ENCODE measurements at regions of chr5 and their contacts with region 1.

Region 1: GRCh38 chr5:64147849-64148441 is 17.7 kb upstream of the RNF180 start:
- DNase-seq: no peak
- H3K4me3 ChIP-seq: no peak overlapping the region
- H3K27me3 ChIP-seq: no peaks in the 10 kb centered on the region; the same call in 1 of the 2 replicates
- CTCF ChIP-seq: peak; percentile 92

Region 2: GRCh38 chr5:64125521-64125920 is 22.4 kb before region 1 on chr5:
- CTCF ChIA-PET with region 1: no interaction called
- POLR2A ChIA-PET with region 1: no interaction called
- DNase-seq: no peak
- H3K4me3 ChIP-seq: no peak overlapping the region
- H3K27me3 ChIP-seq: no peaks in the 10 kb centered on the region
- CTCF ChIP-seq: no peak

Region 3: DNA sequence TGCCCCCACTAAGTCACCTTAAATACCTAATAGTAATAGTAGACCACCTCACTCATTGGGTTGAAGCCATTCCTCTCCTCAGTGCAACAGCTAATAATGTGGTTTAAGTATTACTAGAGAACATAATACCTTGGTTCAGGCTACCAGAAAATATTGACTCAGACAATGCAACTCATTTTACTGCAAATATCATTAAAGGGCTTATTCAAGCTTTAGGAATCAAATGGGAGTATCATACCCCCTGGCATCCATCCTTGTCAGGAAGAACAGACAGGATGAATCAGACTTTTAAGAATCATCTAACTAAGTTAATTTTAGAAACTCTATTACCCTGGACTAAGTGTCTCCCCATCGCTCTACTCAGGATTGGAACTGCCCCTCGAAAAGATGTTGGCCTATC is 10.9 kb after region 1 on chr5:
- CTCF ChIA-PET with region 1: interaction called, 14 read pairs
- POLR2A ChIA-PET with region 1: no interaction called
- DNase-seq: no peak
- H3K4me3 ChIP-seq: no peak overlapping the region
- H3K27me3 ChIP-seq: no peaks in the 10 kb centered on the region
- CTCF ChIP-seq: no peak

Region 4: DNA sequence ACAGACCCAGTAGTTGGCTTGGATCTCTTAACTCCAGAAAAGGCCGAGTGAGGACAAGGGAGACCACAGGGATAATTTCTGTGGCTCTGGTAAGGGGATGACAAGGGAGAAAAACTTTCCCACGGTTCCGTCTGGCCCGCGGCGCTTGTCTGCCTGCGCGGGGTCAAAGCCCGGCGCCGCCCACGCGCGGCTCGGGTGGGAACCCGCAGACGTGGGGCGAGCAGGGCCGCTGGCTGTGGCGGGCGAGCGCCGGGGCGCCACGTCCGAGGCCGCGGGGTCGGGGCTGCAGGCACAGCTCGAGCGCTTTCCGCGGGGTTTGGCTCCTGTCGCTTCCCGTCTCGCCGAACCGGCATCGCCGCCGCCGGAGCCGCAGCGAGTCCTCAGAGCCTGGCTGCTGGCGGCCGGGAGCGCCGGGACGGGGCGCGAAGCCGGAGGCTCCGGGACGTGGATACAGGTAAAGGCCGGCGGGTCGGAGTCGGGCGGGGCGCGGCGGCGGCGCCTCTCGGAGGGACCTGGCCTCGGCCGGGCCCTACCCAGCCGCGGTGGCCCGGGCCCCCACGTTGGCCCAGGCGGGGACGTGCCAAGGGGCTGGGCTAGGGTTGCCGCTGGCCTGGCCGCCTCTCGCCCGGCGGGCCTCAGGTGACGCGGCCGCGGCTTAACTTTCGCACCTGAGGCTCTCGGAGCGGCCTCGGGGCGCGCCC is 17.7 kb after region 1 on chr5 and contains the start of gene RNF180:
- CTCF ChIA-PET with region 1: interaction called, 14 read pairs
- POLR2A ChIA-PET with region 1: no interaction called
- DNase-seq: no peak
- H3K4me3 ChIP-seq: peak within 1 kb of the TSS; percentile 75
- H3K27me3 ChIP-seq: peaks cover 3% of the 10 kb centered on the region
- CTCF ChIP-seq: no peak
- polyA plus RNA-seq, gene RNF180: 1.0 and 1.8 TPM in 2 replicates

Region 5: GRCh38 chr5:64207978-64208377 is 60.0 kb after region 1 on chr5:
- CTCF ChIA-PET with region 1: interaction called, 19 read pairs
- POLR2A ChIA-PET with region 1: no interaction called
- DNase-seq: no peak
- H3K4me3 ChIP-seq: no peak overlapping the region
- H3K27me3 ChIP-seq: no peaks in the 10 kb centered on the region
- CTCF ChIP-seq: no peak

Region 6: GRCh38 chr5:64229163-64229774 is 81.3 kb after region 1 on chr5:
- CTCF ChIA-PET with region 1: interaction called, 14 read pairs
- POLR2A ChIA-PET with region 1: no interaction called
- DNase-seq: no peak
- H3K4me3 ChIP-seq: no peak overlapping the region
- H3K27me3 ChIP-seq: no peaks in the 10 kb centered on the region
- CTCF ChIP-seq: peak; percentile 56

Region 7: GRCh38 chr5:64451551-64451950 is 303.6 kb after region 1 on chr5:
- CTCF ChIA-PET with region 1: no interaction called
- POLR2A ChIA-PET with region 1: no interaction called
- DNase-seq: no peak
- H3K4me3 ChIP-seq: no peak overlapping the region
- H3K27me3 ChIP-seq: no peaks in the 10 kb centered on the region; the same call in 1 of the 2 replicates
- CTCF ChIP-seq: no peak

Region 8: DNA sequence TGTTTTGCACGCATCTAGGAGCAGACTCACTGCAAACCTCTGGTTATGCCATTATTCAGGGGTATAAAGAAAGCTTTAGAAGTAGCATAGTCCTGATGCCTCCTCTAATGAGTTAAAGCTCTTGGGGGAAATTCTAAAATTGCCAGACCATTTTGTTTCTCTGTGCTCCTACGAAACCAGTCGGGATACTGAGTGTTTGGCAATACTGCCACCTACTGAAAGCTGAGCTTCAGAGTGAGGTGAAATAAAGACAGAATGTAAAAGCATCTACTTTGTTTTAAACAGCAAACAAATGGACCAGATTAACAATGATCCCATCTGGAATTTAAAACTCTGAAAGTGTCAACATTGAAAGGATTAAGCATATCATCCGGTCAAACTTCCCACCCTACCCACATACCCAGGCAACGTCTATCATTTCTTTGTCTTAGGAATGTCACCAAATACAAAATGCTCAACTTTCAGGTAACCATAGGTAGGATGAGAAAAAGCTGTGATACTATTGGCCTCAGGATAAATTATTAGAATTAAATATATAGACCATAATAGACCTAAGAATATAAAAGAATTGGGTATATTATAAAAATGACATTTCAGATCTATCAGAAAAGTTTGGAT is 464.5 kb after region 1 on chr5:
- CTCF ChIA-PET with region 1: interaction called, 58 read pairs
- POLR2A ChIA-PET with region 1: no interaction called
- DNase-seq: no peak
- H3K4me3 ChIP-seq: no peak overlapping the region
- H3K27me3 ChIP-seq: peaks cover 4% of the 10 kb centered on the region
- CTCF ChIP-seq: peak; percentile 82